Activated B cell treated with CpG ODN at 0.5 μM for 24 hours (primary cell): ENCODE measurements at regions of chr7 and their contacts with region 1.

Region 1: GRCh38 chr7:7681179-7681935 is 37.0 kb downstream of the RPA3 start:
- DNase-seq: no peak
- ATAC-seq: peak; percentile 84
- H3K4me3 Mint-ChIP-seq: no peak overlapping the region
- H3K27ac Mint-ChIP-seq: peak overlapping the region; percentile 50
- H3K4me1 Mint-ChIP-seq: peaks cover 27% of the 10 kb centered on the region
- H3K27me3 Mint-ChIP-seq: no peaks in the 10 kb centered on the region
- CTCF ChIP-seq: no peak

Region 2: GRCh38 chr7:7542251-7542835 is 139.0 kb before region 1 on chr7:
- CTCF ChIA-PET with region 1: no interaction called
- POLR2A ChIA-PET with region 1: no interaction called
- intact Hi-C with region 1: no loop called
- DNase-seq: no peak
- ATAC-seq: no peak
- H3K4me3 Mint-ChIP-seq: no peak overlapping the region
- H3K27ac Mint-ChIP-seq: no peak overlapping the region
- H3K4me1 Mint-ChIP-seq: peaks cover 2% of the 10 kb centered on the region
- H3K27me3 Mint-ChIP-seq: peaks cover 6% of the 10 kb centered on the region
- CTCF ChIP-seq: no peak

Region 3: DNA sequence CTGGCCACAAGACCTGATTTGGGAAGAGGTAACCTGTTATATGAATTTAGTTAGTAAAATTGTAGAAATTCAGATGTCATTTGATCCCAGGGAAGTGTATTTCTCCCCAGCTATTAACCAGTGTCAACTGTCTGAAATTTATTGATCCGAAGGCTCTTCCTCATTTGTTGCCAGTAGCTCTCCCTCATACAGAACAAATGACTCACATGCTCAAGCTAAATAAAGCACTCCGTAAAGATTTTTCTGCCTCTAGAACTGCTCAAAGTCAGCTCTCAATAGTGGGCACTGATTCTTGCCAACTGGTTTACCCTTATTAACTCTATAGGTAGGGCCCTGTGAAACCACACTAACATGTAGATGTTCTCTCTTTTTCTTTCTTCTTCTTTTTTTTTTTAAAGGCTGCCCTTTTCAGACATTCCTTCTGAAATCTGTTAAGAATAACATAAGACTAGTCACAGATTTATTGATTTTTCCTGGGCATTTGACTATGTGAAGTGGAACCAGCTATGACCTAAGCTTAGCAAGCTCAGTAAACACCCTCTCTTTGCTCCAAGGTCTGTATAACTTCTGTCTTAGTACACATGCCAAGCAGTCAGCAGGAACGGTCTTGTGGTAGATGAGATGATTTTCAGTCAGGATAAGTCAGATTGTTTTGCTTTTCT is 15.2 kb after region 1 on chr7:
- CTCF ChIA-PET with region 1: interaction called, 15 read pairs
- POLR2A ChIA-PET with region 1: interaction called, 3 read pairs
- intact Hi-C with region 1: no loop called
- DNase-seq: no peak
- ATAC-seq: no peak
- H3K4me3 Mint-ChIP-seq: no peak overlapping the region
- H3K27ac Mint-ChIP-seq: no peak overlapping the region
- H3K4me1 Mint-ChIP-seq: peaks cover 27% of the 10 kb centered on the region
- H3K27me3 Mint-ChIP-seq: no peaks in the 10 kb centered on the region
- CTCF ChIP-seq: no peak

Region 4: DNA sequence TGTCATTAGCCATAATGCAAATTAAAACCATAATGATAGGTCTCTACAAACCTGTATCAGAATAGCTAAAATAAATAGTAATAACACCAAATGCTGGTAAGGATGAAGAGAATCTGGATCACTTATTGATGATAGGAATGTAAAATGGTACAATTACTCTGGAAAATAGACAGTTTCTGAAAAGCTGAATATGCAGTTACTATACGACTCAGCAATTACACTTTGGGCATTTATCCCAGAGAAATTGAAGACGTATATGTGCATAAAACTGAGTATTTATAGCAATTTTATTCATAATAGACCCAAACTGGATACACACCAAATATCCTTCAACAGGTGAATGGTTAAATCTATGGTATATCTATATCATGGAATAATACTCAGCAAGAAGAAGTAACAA is 29.1 kb after region 1 on chr7:
- CTCF ChIA-PET with region 1: no interaction called
- POLR2A ChIA-PET with region 1: no interaction called
- intact Hi-C with region 1: no loop called
- DNase-seq: no peak
- ATAC-seq: no peak
- H3K4me3 Mint-ChIP-seq: no peak overlapping the region
- H3K27ac Mint-ChIP-seq: no peak overlapping the region
- H3K4me1 Mint-ChIP-seq: peaks cover 37% of the 10 kb centered on the region
- H3K27me3 Mint-ChIP-seq: no peaks in the 10 kb centered on the region
- CTCF ChIP-seq: no peak

Region 5: DNA sequence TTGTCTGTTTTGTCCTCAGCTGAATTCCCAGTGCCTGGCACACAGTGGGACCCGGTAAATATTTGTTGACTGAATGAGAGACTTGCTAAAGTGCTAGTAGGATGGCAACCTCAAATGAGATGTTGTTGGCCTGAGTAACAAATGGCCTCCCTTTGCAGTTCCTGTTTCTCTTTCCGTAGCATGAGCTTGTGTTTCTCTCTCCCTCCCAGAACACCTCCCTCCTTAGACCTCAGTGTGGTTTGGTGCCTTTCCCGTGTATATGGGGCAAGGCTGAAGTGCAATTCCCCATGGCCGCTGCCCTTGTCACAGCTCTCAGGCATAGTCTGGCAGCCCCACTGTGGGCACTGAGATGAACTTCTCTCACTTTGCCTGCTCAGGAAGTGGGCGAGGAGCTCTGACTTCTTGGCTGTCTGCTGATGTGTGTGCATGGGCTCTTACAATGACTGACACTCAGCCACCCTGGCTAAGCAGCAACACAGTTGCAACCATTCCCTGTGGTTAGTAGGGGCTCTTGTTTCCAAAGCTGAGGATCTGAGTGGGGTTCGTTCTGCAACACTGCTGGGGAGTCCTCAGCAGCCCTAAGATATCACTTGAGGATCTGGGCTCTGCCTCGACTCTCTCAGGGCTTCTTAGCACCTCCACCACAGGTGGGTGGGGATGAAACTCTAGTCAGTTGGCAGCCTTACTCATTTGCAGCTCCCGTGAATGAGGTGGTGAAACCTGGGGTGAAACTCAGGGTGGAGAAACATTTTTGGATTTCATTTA is 444.5 kb after region 1 on chr7:
- CTCF ChIA-PET with region 1: interaction called, 4 read pairs
- POLR2A ChIA-PET with region 1: no interaction called
- intact Hi-C with region 1: loop called (anchors 5 kb)
- DNase-seq: peak; percentile 40
- ATAC-seq: peak; percentile 92
- H3K4me3 Mint-ChIP-seq: peak overlapping the region; percentile 71
- H3K27ac Mint-ChIP-seq: peak overlapping the region; percentile 93
- H3K4me1 Mint-ChIP-seq: peaks cover 65% of the 10 kb centered on the region
- H3K27me3 Mint-ChIP-seq: no peaks in the 10 kb centered on the region
- CTCF ChIP-seq: no peak

Region 6: GRCh38 chr7:8217200-8218068 is 536.1 kb after region 1 on chr7:
- CTCF ChIA-PET with region 1: interaction called, 18 read pairs
- POLR2A ChIA-PET with region 1: interaction called, 5 read pairs
- intact Hi-C with region 1: loop called (anchors 1 kb)
- DNase-seq: no peak
- ATAC-seq: no peak
- H3K4me3 Mint-ChIP-seq: no peak overlapping the region
- H3K27ac Mint-ChIP-seq: no peak overlapping the region
- H3K4me1 Mint-ChIP-seq: no peaks in the 10 kb centered on the region
- H3K27me3 Mint-ChIP-seq: no peaks in the 10 kb centered on the region
- CTCF ChIP-seq: no peak